Cardiac septum (tissue), 1 donor: ENCODE measurements at regions of chr10 and their contacts with region 1.

Region 1: GRCh38 chr10:94069884-94070283 is 76.2 kb downstream of the PLCE1 start:
- DNase-seq: no peak

Region 2: GRCh38 chr10:93757136-93757535 is 312.7 kb before region 1 on chr10:
- intact Hi-C with region 1: no loop called
- DNase-seq: no peak

Region 3: GRCh38 chr10:94012834-94013233 is 57.0 kb before region 1 on chr10:
- intact Hi-C with region 1: loop called (anchors 5 kb)
- DNase-seq: no peak